ENCODE measurements at regions of chr6 and their contacts with region 1.

Region 1: DNA sequence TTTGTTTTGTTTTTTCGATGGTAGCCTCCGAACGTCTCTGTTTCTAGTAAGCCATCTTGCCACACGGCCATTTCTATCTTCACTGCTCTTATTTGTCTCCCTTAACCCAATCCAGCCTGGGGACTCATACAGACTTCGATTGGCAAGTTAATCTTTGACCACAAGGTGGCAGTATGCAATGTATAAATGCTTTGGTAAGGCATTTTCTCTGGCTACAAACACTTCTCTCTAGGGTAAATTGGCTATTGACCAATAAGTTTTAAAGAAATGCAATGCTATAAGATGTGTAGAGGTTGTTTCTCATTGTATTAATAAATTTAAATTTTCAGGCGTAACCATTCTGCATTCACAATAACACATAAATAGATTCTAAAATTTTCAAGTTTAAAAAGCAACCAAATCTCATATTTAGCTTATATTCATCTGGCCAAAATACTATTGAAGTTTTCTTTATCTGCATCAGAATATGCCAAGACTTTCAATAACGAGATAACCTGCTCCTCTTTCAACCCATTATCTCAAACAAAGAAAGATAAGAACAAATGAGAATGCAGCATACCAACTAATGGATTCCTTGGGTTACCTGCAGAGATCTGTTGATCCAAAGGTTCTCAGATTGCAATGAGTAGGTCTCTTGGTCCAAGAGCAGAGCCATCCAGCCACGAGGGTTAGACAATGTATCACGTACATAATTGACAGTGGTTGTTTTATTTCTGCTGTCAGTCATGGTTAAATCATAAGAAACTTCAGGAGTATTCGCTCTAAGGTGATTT is 231.9 kb downstream of the PKHD1 start:
- DNase-seq: peak; percentile 67
- ATAC-seq: peak; percentile 54; the same call in 1 of the 2 replicates
- H3K4me3 ChIP-seq: no peak overlapping the region
- H3K27ac ChIP-seq: no peak overlapping the region
- H3K4me1 ChIP-seq: no peaks in the 10 kb centered on the region
- H3K27me3 ChIP-seq: no peaks in the 10 kb centered on the region
- CTCF ChIP-seq: peak; percentile 61
- POLR2A ChIP-seq: no peak
- RAD21 ChIP-seq: peak; percentile 40

Region 2: GRCh38 chr6:51753635-51754034 is 101.9 kb before region 1 on chr6:
- CTCF ChIA-PET with region 1: no interaction called
- POLR2A ChIA-PET with region 1: no interaction called
- dilution Hi-C with region 1: no loop called
- in situ Hi-C with region 1: no loop called
- intact Hi-C with region 1: no loop called
- DNase-seq: no peak
- ATAC-seq: no peak
- H3K4me3 ChIP-seq: no peak overlapping the region
- H3K27ac ChIP-seq: no peak overlapping the region
- H3K4me1 ChIP-seq: no peaks in the 10 kb centered on the region
- H3K27me3 ChIP-seq: no peaks in the 10 kb centered on the region
- CTCF ChIP-seq: no peak
- POLR2A ChIP-seq: no peak
- RAD21 ChIP-seq: no peak

Region 3: DNA sequence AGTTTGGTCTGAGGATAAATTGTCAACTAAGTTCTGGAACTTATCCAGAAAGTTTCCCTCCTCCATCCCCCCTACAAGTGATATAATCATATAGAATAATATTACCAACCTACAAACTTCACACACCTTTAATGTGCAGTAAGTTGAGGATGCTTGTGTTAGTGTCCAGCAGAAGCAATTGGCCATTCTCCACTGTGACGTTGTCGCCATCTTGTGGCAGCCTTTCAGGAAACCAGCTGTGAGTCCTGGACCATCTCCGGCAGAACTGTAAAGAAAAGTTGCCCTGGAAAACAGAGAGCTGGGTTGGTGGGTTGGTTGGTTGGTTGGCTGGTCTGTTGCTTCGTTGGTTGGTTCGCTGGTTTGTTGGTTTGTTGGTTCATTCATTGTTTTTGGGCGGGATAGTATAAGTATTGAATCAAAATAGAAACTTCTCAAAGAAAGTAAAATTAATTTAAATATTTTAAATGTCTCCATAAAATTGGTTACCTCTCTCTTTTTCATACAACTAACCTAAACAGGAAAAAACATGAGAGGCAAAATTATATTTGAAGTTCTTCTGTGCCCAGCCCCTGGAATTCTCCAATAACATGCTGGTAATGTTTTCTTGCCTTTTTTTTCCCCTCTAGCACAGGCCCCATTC is 104.4 kb after region 1 on chr6:
- CTCF ChIA-PET with region 1: no interaction called
- POLR2A ChIA-PET with region 1: no interaction called
- dilution Hi-C with region 1: no loop called
- in situ Hi-C with region 1: no loop called
- intact Hi-C with region 1: loop called (anchors 1 kb)
- DNase-seq: peak; percentile 59
- ATAC-seq: peak; percentile 81
- H3K4me3 ChIP-seq: no peak overlapping the region
- H3K27ac ChIP-seq: no peak overlapping the region
- H3K4me1 ChIP-seq: no peaks in the 10 kb centered on the region
- H3K27me3 ChIP-seq: no peaks in the 10 kb centered on the region
- CTCF ChIP-seq: peak; percentile 73
- POLR2A ChIP-seq: no peak
- RAD21 ChIP-seq: peak; percentile 74

Region 4: DNA sequence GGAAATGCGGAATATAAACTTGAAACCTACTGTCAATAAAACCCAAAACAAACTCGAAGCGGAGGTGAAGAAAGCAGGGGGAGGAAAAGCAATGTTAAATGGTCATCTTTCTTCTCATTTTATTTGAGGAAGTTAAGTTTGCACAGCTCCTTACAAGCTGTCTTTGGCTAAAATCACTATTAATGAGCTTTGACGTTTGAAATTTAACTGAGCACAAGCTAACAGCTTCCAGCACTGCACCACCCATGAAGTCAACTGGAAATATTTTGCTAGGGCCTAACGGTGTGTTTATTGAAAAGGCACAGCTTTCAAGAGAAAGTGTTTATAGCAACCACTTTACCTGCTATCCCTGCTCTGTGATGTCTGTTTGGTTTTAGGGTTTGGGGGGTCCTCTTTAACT is 128.1 kb after region 1 on chr6:
- CTCF ChIA-PET with region 1: no interaction called
- POLR2A ChIA-PET with region 1: no interaction called
- dilution Hi-C with region 1: no loop called
- in situ Hi-C with region 1: no loop called
- intact Hi-C with region 1: no loop called
- DNase-seq: no peak
- ATAC-seq: no peak
- H3K4me3 ChIP-seq: no peak overlapping the region
- H3K27ac ChIP-seq: no peak overlapping the region
- H3K4me1 ChIP-seq: no peaks in the 10 kb centered on the region
- H3K27me3 ChIP-seq: no peaks in the 10 kb centered on the region
- CTCF ChIP-seq: no peak
- POLR2A ChIP-seq: no peak
- RAD21 ChIP-seq: no peak

Region 5: DNA sequence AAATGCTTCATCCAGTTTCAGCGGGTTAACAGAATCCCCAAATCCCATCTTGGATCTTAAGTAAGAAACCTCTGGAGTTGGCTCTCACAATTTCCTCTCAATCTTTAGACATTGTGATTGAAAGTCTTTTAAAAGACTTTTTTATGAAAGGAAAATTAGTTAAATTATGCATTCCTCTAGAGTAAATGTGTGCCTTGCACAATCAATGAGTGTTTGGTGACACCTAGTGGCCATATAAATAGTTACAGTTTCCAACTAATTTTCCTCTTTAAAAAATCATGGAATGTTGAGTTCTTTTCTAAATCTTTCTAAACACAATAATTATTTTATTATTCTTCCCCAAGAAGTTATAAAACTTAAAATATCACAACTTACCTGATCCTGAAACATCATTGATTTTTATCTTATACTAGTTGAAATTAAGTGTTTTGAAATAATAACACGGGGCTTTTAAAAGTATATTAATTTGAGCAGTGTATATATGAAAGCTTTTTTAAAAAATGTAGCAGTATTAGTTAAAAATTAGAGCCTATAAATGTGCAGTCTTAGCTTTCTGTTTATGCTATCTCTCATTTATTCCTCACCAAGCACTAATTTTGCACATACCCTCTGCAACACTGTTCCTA is 165.6 kb after region 1 on chr6:
- CTCF ChIA-PET with region 1: no interaction called
- POLR2A ChIA-PET with region 1: no interaction called
- dilution Hi-C with region 1: no loop called
- in situ Hi-C with region 1: loop called (anchors 10 kb)
- intact Hi-C with region 1: no loop called
- DNase-seq: peak; percentile 34
- ATAC-seq: no peak
- H3K4me3 ChIP-seq: no peak overlapping the region
- H3K27ac ChIP-seq: no peak overlapping the region
- H3K4me1 ChIP-seq: no peaks in the 10 kb centered on the region
- H3K27me3 ChIP-seq: no peaks in the 10 kb centered on the region; the same call in 1 of the 2 replicates
- CTCF ChIP-seq: peak; percentile 70
- POLR2A ChIP-seq: no peak
- RAD21 ChIP-seq: peak; percentile 76

Measured in IMR-90 (cell line).